A673 (cell line): ENCODE measurements at regions of chr3 and their contacts with region 1.

Region 1: DNA sequence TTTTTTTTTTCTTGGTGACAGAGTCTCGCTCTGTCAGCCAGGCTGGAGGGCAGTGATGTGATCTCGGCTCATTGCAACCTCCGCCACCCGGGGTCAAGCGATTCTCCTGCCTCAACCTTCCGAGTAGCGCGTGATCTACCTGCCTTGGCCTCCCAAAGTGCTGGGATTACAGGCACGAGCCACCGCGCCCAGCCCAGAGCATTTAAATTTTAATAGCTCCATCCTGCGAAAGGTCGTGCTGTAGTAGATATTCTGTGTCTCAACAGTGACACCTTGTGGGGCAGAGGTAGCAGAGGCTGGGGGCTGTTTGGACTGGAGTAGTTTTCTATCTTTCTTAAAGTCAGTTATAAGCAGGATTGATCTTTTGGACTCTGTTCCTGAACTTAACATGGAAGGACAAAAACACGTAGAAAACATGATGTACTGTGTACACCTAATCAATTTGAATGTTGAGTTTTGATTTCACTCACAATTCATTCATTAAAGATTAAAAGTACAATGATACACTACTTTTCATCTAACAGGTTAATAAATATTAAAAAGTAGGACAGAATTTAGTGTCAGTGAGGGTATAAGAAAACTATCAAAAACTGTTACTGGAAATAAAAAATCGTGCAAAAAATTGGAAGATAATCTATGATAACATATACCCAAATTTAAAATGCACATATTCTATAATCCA is 11.0 kb upstream of the PDCD6IP start:
- DNase-seq: peak; percentile 81
- H3K4me3 ChIP-seq: peak overlapping the region; percentile 24
- H3K27ac ChIP-seq: no peak overlapping the region
- H3K4me1 ChIP-seq: peaks cover 6% of the 10 kb centered on the region
- H3K27me3 ChIP-seq: no peaks in the 10 kb centered on the region
- CTCF ChIP-seq: peak; percentile 89

Region 2: GRCh38 chr3:32947789-32948238 is 839.7 kb before region 1 on chr3:
- CTCF ChIA-PET with region 1: interaction called, 3 read pairs
- POLR2A ChIA-PET with region 1: no interaction called
- intact Hi-C with region 1: loop called (anchors 5 kb)
- DNase-seq: peak; percentile 91
- H3K4me3 ChIP-seq: no peak overlapping the region
- H3K27ac ChIP-seq: no peak overlapping the region
- H3K4me1 ChIP-seq: no peaks in the 10 kb centered on the region
- H3K27me3 ChIP-seq: no peaks in the 10 kb centered on the region
- CTCF ChIP-seq: peak; percentile 89

Region 3: GRCh38 chr3:33372218-33373081 is 415.0 kb before region 1 on chr3:
- CTCF ChIA-PET with region 1: interaction called, 11 read pairs
- POLR2A ChIA-PET with region 1: no interaction called
- intact Hi-C with region 1: loop called (anchors 10 kb)
- DNase-seq: peak; percentile 76
- H3K4me3 ChIP-seq: no peak overlapping the region
- H3K27ac ChIP-seq: no peak overlapping the region
- H3K4me1 ChIP-seq: no peaks in the 10 kb centered on the region
- H3K27me3 ChIP-seq: no peaks in the 10 kb centered on the region
- CTCF ChIP-seq: peak; percentile 96

Region 4: GRCh38 chr3:33798411-33799201 is 11.1 kb after region 1 on chr3 and contains the start of gene PDCD6IP:
- CTCF ChIA-PET with region 1: interaction called, 10 read pairs
- POLR2A ChIA-PET with region 1: interaction called, 3 read pairs
- intact Hi-C with region 1: no loop called
- DNase-seq: peak; percentile 94
- H3K4me3 ChIP-seq: peak within 1 kb of the TSS; percentile 72
- H3K27ac ChIP-seq: peak within 1 kb of the TSS; percentile 80
- H3K4me1 ChIP-seq: peaks cover 8% of the 10 kb centered on the region
- H3K27me3 ChIP-seq: no peaks in the 10 kb centered on the region
- CTCF ChIP-seq: peak; percentile 31; the same call in 1 of the 2 replicates
- total RNA-seq, gene PDCD6IP: 213 and 230 TPM in 2 replicates

Region 5: GRCh38 chr3:34361921-34362320 is 574.5 kb after region 1 on chr3:
- CTCF ChIA-PET with region 1: no interaction called
- POLR2A ChIA-PET with region 1: no interaction called
- intact Hi-C with region 1: no loop called
- DNase-seq: no peak
- H3K4me3 ChIP-seq: no peak overlapping the region
- H3K27ac ChIP-seq: no peak overlapping the region
- H3K4me1 ChIP-seq: peaks cover 7% of the 10 kb centered on the region
- H3K27me3 ChIP-seq: no peaks in the 10 kb centered on the region
- CTCF ChIP-seq: no peak

Region 6: DNA sequence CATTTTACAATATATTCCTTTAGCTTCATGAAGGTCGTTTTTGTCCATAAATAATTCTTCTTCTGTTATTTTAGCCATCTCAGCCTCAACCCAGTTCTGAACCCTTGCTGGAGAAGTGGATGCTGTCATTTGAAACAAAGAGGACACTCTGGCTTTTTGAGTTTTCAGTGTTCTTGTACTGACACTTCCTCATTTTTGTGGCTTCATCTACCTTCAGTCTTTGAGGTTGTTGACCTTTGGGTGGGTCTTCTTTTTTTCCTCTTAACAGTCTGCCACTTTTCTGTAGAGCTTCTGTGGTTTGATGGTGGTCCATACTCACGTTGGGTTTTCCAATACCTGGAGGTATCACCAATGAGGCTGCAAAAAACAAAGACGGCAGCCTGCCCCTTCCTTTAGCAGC is 661.8 kb after region 1 on chr3:
- CTCF ChIA-PET with region 1: no interaction called
- POLR2A ChIA-PET with region 1: no interaction called
- intact Hi-C with region 1: no loop called
- DNase-seq: no peak
- H3K4me3 ChIP-seq: no peak overlapping the region
- H3K27ac ChIP-seq: no peak overlapping the region
- H3K4me1 ChIP-seq: no peaks in the 10 kb centered on the region
- H3K27me3 ChIP-seq: no peaks in the 10 kb centered on the region
- CTCF ChIP-seq: no peak